Activated CD4-positive, alpha-beta memory T cell treated with anti-CD3 and anti-CD28 coated beads for 36 hours (primary cell): ENCODE measurements at regions of chr2 and their contacts with region 1.

Region 1: GRCh38 chr2:14944562-14945346 is 312.2 kb downstream of the LRATD1 start:
- DNase-seq: no peak
- H3K4me3 Mint-ChIP-seq: no peak overlapping the region
- H3K27ac Mint-ChIP-seq: no peak overlapping the region
- H3K4me1 Mint-ChIP-seq: no peaks in the 10 kb centered on the region
- H3K27me3 Mint-ChIP-seq: peaks cover 9% of the 10 kb centered on the region

Region 2: GRCh38 chr2:14673351-14673875 is 271.3 kb before region 1 on chr2:
- CTCF ChIA-PET with region 1: no interaction called
- POLR2A ChIA-PET with region 1: no interaction called
- intact Hi-C with region 1: no loop called
- DNase-seq: no peak
- H3K4me3 Mint-ChIP-seq: no peak overlapping the region
- H3K27ac Mint-ChIP-seq: no peak overlapping the region
- H3K4me1 Mint-ChIP-seq: no peaks in the 10 kb centered on the region
- H3K27me3 Mint-ChIP-seq: no peaks in the 10 kb centered on the region

Region 3: GRCh38 chr2:14903709-14904374 is 40.9 kb before region 1 on chr2:
- CTCF ChIA-PET with region 1: no interaction called
- POLR2A ChIA-PET with region 1: no interaction called
- intact Hi-C with region 1: loop called (anchors 5 kb)
- DNase-seq: peak; percentile 71
- H3K4me3 Mint-ChIP-seq: no peak overlapping the region
- H3K27ac Mint-ChIP-seq: no peak overlapping the region
- H3K4me1 Mint-ChIP-seq: no peaks in the 10 kb centered on the region
- H3K27me3 Mint-ChIP-seq: no peaks in the 10 kb centered on the region